ENCODE measurements at regions of chr7 and their contacts with region 1.

Region 1: DNA sequence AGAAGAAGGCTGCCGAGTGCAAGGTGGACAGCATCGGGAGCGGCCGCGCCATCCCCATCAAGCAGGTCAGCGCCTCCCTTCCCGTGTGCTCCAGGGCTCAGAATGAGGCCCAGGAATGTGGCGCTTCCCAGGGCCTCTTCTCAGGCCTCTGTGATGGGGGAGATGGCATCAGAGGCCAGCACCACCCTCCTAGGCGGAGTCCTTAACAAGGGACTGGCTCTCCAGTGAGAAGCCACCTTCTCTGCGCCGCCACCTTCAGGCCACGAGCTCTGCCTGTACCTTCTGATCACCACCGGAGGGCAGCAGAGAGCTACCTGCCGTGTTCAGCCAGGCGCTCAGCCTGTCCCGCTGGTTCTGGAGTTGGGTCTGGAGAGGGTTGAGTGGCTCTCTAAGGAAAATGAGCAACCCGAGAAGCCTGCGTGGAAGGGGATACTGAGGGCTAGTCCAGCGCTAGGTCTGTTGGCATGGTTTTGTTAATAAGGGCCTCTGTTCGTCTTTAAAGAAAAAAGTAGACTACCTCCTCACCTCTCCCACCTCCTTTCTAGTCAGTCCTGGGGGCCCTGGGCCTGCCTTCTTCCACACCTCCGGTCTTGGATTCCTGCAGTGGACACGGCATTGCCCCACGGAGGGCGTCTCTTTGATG is 37.7 kb downstream of the AGAP3 start:
- DNase-seq: peak; percentile 74
- H3K4me3 ChIP-seq: no peak overlapping the region
- H3K27ac ChIP-seq: no peak overlapping the region
- H3K4me1 ChIP-seq: peaks cover 6% of the 10 kb centered on the region
- H3K27me3 ChIP-seq: no peaks in the 10 kb centered on the region
- CTCF ChIP-seq: peak; percentile 98 to 99
- POLR2A ChIP-seq: no peak

Region 2: GRCh38 chr7:151085691-151086620 is 38.0 kb before region 1 on chr7 and contains the start of gene AGAP3:
- CTCF ChIA-PET with region 1: interaction called, 10 read pairs
- POLR2A ChIA-PET with region 1: no interaction called
- dilution Hi-C with region 1: no loop called
- intact Hi-C with region 1: no loop called
- DNase-seq: peak; percentile 80
- H3K4me3 ChIP-seq: peak within 1 kb of the TSS; percentile 81 to 96 (median 82)
- H3K27ac ChIP-seq: peak within 1 kb of the TSS; percentile 98
- H3K4me1 ChIP-seq: peaks cover 59% of the 10 kb centered on the region
- H3K27me3 ChIP-seq: no peaks in the 10 kb centered on the region
- CTCF ChIP-seq: peak in 1 of 2 donors; percentile 1
- POLR2A ChIP-seq: peak; percentile 89
- total RNA-seq, gene AGAP3: 171 and 173 TPM in 2 replicates

Region 3: GRCh38 chr7:151143261-151144015 is 19.5 kb after region 1 on chr7:
- CTCF ChIA-PET with region 1: interaction called, 17 read pairs
- POLR2A ChIA-PET with region 1: no interaction called
- dilution Hi-C with region 1: no loop called
- intact Hi-C with region 1: no loop called
- DNase-seq: no peak
- H3K4me3 ChIP-seq: no peak overlapping the region
- H3K27ac ChIP-seq: no peak overlapping the region
- H3K4me1 ChIP-seq: no peaks in the 10 kb centered on the region
- H3K27me3 ChIP-seq: no peaks in the 10 kb centered on the region
- CTCF ChIP-seq: no peak
- POLR2A ChIP-seq: no peak

Region 4: DNA sequence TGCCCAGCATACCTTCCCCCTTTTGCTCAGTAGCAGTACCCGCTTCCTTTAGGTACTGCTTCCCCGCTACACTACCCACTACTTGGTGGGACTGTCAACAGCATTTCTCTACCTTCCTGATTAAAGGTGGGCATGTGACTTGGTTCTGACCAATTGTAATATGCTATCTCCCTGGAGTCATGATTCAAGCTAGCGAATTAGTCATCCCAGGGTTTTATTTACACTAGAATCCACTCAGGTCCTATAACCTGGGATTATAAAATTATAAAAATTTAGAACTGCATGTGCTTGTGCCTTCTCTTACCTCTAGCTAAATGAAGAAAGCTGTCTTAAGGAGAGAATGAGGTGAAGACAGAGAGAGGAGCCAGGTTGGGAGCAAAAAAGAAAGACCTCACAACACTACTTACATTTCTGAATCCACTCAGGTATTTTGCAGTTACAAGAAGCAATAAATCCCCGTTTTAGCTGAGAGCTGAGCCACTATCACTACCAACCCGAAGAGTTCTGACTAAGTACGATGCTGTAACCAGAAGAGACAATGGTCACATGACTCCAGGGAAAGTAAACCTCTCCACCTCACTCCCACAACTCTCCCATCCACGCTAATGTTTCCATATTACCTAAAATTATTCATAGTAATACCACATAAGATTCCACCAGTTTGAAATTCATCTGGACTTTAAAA is 33.8 kb after region 1 on chr7:
- CTCF ChIA-PET with region 1: interaction called, 13 read pairs
- POLR2A ChIA-PET with region 1: interaction called, 3 read pairs
- dilution Hi-C with region 1: no loop called
- intact Hi-C with region 1: no loop called
- DNase-seq: peak; percentile 71
- H3K4me3 ChIP-seq: no peak overlapping the region
- H3K27ac ChIP-seq: no peak overlapping the region
- H3K4me1 ChIP-seq: peaks cover 4% of the 10 kb centered on the region
- H3K27me3 ChIP-seq: peaks cover 13 to 33% of the 10 kb centered on the region in 2 experiments
- CTCF ChIP-seq: no peak
- POLR2A ChIP-seq: no peak

Region 5: DNA sequence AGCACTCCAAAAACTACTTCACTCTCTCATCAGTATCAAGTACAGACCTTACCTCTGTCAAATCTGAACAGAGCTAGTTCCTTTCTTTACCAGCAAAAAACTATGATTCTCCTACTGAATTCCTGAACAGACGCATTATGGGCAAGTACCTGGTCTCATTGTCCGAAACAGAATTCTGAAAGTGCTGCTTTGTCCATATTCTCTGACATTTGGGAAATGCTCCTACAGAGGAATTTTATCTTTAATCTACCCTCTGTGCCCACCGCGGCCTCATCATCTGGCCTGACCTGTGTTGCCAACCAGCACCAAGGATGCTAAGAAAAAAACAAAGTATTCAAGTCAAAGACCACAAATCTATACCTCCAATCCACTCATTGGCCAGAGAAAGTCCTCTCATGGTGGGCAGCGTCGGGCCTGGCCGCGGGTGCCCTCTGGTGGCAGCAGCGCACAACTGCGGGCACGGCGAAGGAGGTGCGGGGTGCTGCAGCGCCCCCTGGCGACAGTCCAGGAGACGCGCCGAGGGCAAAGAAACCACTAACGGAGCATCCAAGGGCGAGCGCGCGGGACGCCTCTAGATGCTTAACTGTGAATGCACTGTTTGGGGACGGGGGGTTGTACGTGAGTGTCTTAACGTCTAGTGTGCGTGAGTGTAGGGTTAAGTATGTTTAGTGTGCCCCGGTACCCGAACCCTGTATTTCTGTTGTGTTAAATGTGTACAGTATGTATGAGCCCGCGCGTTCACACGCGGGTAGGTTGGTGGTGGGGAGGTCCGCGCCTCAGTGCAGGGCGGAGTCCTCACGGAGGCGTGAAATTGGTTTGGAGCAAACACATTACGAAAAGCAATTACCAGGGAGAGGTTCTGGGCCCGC is 48.6 kb after region 1 on chr7:
- CTCF ChIA-PET with region 1: interaction called, 14 read pairs
- POLR2A ChIA-PET with region 1: no interaction called
- dilution Hi-C with region 1: no loop called
- intact Hi-C with region 1: loop called (anchors 1 kb)
- DNase-seq: peak; percentile 76
- H3K4me3 ChIP-seq: no peak overlapping the region
- H3K27ac ChIP-seq: no peak overlapping the region
- H3K4me1 ChIP-seq: peaks cover 3% of the 10 kb centered on the region
- H3K27me3 ChIP-seq: peaks cover 21 to 26% of the 10 kb centered on the region in 2 experiments
- CTCF ChIP-seq: peak; percentile 100
- POLR2A ChIP-seq: no peak

Region 6: DNA sequence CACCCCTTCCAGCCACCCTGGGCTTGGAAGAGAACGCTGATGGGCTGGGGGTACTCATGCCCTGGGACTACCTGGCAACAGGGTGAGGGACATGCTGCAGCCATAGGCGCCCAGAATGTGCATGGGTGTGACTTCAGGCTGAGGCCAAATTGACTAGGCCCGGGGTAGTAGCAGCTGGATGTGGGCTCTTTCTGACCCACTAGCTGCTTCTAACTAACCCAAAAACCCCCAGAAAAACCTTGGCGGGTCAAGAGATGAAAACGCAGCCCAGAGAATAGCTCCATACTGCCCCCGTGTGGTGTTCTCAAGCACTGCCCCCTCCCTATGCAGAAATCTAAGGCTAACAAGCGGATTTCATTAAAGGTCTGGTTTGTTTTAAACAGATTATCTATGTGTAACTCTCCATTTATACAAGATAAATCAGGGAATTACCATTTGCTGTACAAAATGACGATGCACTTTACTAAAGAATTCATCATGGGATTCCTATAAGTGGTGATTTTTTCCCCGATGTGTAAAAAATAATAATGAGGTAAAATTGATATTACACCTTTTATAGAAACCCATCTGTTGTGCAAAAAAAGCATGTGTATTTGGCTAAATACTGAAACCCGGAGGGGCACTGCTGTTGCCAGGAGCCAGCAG is 120.4 kb after region 1 on chr7:
- CTCF ChIA-PET with region 1: interaction called, 13 read pairs
- POLR2A ChIA-PET with region 1: no interaction called
- dilution Hi-C with region 1: no loop called
- intact Hi-C with region 1: loop called (anchors 1 kb)
- DNase-seq: peak; percentile 61
- H3K4me3 ChIP-seq: no peak overlapping the region
- H3K27ac ChIP-seq: no peak overlapping the region
- H3K4me1 ChIP-seq: peaks cover 15% of the 10 kb centered on the region
- H3K27me3 ChIP-seq: peaks cover 0 to 6% of the 10 kb centered on the region in 2 experiments
- CTCF ChIP-seq: peak; percentile 87 to 94
- POLR2A ChIP-seq: no peak

Region 7: GRCh38 chr7:151304856-151305255 is 180.9 kb after region 1 on chr7:
- CTCF ChIA-PET with region 1: interaction called, 10 read pairs
- POLR2A ChIA-PET with region 1: no interaction called
- dilution Hi-C with region 1: no loop called
- intact Hi-C with region 1: loop called (anchors 1 kb)
- DNase-seq: no peak
- H3K4me3 ChIP-seq: peak overlapping the region in 1 of 3 experiments; percentile 20
- H3K27ac ChIP-seq: no peak overlapping the region
- H3K4me1 ChIP-seq: peaks cover 3% of the 10 kb centered on the region
- H3K27me3 ChIP-seq: peaks cover 10 to 17% of the 10 kb centered on the region in 2 experiments
- CTCF ChIP-seq: no peak
- POLR2A ChIP-seq: no peak

Measured in endothelial cell of umbilical vein (primary cell).